Dendritic cell treated with granulocyte-macrophage colony-stimulating factor and Interleukin-4, amounts not matched to agents 40 ng/mL and 50 ng/mL, for 4 days (primary cell): ENCODE measurements at regions of chr14 and their contacts with region 1.

Region 1: DNA sequence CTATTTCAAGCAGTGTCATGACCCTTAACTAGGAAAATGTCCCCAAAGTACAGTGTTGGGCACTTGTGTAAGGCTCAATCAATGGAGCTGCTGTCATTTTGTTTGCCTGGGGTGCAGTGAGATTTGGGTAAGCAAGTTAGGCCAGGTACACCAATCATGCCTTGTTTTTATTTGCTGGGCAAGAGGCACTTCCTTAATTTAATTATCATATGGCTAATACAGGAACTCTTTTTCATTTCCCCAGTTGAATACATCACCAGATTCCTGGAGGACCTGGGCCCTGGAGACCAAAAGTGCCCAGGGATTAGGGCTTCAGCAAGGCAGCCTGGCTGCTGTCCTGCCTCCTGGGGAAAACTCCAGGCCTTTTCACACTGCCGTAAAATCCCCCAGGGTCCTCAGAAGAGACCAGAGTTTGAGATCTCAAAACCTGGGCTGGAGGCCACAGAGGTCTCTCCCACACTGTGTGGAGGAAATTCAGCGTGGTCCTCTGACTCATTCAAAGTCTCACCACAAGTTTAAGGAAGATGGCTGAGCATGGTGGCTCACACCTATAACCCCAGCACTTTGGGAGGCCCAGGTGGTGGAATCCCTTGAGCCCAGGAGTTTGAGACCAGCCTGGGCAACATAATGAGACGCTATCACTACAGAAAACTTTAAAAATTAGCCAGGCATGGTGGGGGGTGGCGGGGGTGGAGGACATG is 28.4 kb upstream of the FOXN3 start:
- H3K4me3 Mint-ChIP-seq: no peak overlapping the region
- H3K27ac Mint-ChIP-seq: peak overlapping the region; percentile 86
- H3K4me1 Mint-ChIP-seq: peaks cover 80% of the 10 kb centered on the region
- H3K27me3 Mint-ChIP-seq: no peaks in the 10 kb centered on the region

Region 2: GRCh38 chr14:89430391-89431236 is 14.8 kb before region 1 on chr14:
- intact Hi-C with region 1: loop called (anchors 2 kb)
- H3K4me3 Mint-ChIP-seq: peak overlapping the region; percentile 74
- H3K27ac Mint-ChIP-seq: peak overlapping the region; percentile 94
- H3K4me1 Mint-ChIP-seq: peaks cover 64% of the 10 kb centered on the region
- H3K27me3 Mint-ChIP-seq: no peaks in the 10 kb centered on the region

Region 3: DNA sequence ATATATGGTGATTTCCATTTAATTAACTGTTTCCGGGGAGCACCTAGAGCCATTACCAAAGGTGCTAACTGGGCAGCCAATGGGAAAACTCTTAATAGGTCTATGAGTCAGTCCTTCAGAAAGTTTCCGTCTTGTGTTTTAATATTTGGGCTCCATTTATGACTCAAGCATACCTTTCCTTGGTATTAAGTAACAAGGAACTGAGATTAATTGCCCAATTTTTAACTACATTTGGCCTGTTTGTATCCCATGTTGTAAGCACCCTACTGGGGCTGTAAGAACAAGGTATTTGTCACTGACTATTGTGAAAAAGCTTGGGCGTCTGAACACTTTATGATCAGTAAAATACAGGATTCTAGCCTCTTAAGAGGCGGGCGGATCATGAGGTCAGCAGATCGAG is 34.4 kb after region 1 on chr14:
- intact Hi-C with region 1: loop called (anchors 5 kb)
- H3K4me3 Mint-ChIP-seq: no peak overlapping the region
- H3K27ac Mint-ChIP-seq: peak overlapping the region; percentile 81
- H3K4me1 Mint-ChIP-seq: peaks cover 52% of the 10 kb centered on the region
- H3K27me3 Mint-ChIP-seq: no peaks in the 10 kb centered on the region